ENCODE measurements at regions of chr18 and their contacts with region 1.

Region 1: DNA sequence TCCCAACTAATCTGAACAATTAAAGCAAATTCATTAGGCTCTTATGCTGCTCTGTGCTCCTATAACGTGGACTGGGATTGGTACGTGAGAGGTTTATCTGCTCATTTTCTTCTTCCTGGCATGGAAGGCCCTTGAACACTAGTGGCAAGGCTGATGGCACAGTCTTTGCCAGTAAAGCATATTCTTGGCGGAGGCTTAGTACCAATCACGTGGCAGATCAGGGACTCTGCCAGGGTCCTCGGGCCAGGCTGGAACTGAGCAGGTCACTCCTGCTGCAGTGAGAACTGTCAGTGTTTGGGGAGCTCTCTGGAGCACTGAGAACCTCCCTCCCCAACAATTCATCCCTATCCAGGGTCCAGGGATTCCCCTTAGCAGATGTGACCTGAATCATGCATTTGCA is 3.7 kb upstream of the ALPK2 start:
- DNase-seq: peak; percentile 51 to 56
- ATAC-seq: peak; percentile 47 to 84 (median 78)
- H3K4me3 ChIP-seq: no peak overlapping the region
- H3K27ac ChIP-seq: peak overlapping the region in 9 of 10 donors; percentile 18 to 73 (median 54)
- H3K4me1 ChIP-seq: peaks cover 0 to 9% (median under 1%) of the 10 kb centered on the region in 9 donors
- H3K27me3 ChIP-seq: no peaks in the 10 kb centered on the region
- CTCF ChIP-seq: no peak

Region 2: GRCh38 chr18:58599106-58599505 is 33.4 kb before region 1 on chr18:
- intact Hi-C with region 1: loop called in 1 of 10 experiments (anchors 5 kb)
- DNase-seq: no peak
- ATAC-seq: peak in 1 of 8 donors; percentile 28
- H3K4me3 ChIP-seq: no peak overlapping the region
- H3K27ac ChIP-seq: peak overlapping the region in 4 of 10 donors; percentile 6 to 26 (median 10)
- H3K4me1 ChIP-seq: peaks cover 0 to 43% (median 16%) of the 10 kb centered on the region in 9 donors
- H3K27me3 ChIP-seq: no peaks in the 10 kb centered on the region
- CTCF ChIP-seq: no peak

Measured in heart right ventricle (tissue), 16 donors.